ENCODE measurements at regions of chr11 and their contacts with region 1.

Region 1: GRCh38 chr11:117107701-117108590 is 9.7 kb upstream of the SIK3 start:
- DNase-seq: no peak
- ATAC-seq: no peak
- H3K4me3 ChIP-seq: no peak overlapping the region
- H3K4me3 Mint-ChIP-seq: no peak overlapping the region
- H3K27ac ChIP-seq: no peak overlapping the region
- H3K27ac Mint-ChIP-seq: no peak overlapping the region
- H3K4me1 ChIP-seq: peaks cover 0 to 6% of the 10 kb centered on the region in 2 donors
- H3K4me1 Mint-ChIP-seq: peaks cover 7% of the 10 kb centered on the region
- H3K27me3 ChIP-seq: no peaks in the 10 kb centered on the region
- H3K27me3 Mint-ChIP-seq: no peaks in the 10 kb centered on the region
- CTCF ChIP-seq: no peak

Region 2: GRCh38 chr11:116742104-116742503 is 365.8 kb before region 1 on chr11:
- CTCF ChIA-PET with region 1: interaction called, 10 read pairs
- POLR2A ChIA-PET with region 1: no interaction called
- intact Hi-C with region 1: no loop called
- DNase-seq: no peak
- ATAC-seq: no peak
- H3K4me3 ChIP-seq: no peak overlapping the region
- H3K4me3 Mint-ChIP-seq: no peak overlapping the region
- H3K27ac ChIP-seq: no peak overlapping the region
- H3K27ac Mint-ChIP-seq: no peak overlapping the region
- H3K4me1 ChIP-seq: no peaks in the 10 kb centered on the region
- H3K4me1 Mint-ChIP-seq: no peaks in the 10 kb centered on the region
- H3K27me3 ChIP-seq: no peaks in the 10 kb centered on the region
- H3K27me3 Mint-ChIP-seq: no peaks in the 10 kb centered on the region
- CTCF ChIP-seq: no peak

Region 3: DNA sequence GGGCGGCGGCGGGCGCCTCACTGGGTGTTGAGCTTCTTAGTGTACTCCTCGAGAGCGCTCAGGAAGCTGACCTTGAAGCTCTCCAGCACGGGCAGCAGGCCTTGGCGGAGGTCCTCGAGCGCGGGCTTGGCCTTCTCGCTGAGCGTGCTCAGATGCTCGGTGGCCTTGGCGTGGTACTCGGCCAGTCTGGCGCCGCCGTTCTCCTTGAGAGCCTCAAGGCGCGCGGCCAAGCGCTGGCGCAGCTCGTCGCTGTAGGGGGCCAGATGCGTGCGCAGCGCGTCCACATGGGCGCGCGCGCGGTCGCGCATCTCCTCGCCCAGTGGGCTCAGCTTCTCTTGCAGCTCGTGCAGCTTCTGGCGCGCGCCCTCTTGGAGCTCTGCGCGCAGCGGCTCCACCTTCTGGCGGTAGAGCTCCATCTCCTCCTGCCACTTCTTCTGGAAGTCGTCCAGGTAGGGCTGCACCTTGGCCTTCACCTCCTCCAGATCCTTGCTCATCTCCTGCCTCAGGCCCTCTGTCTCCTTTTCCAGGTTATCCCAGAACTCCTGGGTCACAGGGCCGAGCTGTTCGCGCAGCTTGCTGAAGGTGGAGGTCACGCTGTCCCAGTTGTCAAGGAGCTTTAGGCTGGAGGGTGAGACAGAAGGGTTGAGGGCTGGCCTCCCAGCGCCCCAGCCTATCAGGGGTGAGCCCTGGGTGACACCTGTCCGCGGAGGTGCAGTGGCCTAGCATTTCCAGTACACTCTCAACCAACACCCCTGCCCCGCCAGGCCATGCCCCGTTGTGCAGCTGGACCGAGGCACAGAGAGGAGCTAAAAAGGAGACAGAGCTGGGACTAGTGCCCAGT is 271.9 kb before region 1 on chr11:
- CTCF ChIA-PET with region 1: interaction called, 10 read pairs
- POLR2A ChIA-PET with region 1: no interaction called
- intact Hi-C with region 1: no loop called
- DNase-seq: peak; percentile 84
- ATAC-seq: peak; percentile 91
- H3K4me3 ChIP-seq: peak overlapping the region in 4 of 5 experiments; percentile 38 to 61 (median 46)
- H3K4me3 Mint-ChIP-seq: peak overlapping the region; percentile 83
- H3K27ac ChIP-seq: no peak overlapping the region
- H3K27ac Mint-ChIP-seq: no peak overlapping the region
- H3K4me1 ChIP-seq: peaks cover 7 to 14% of the 10 kb centered on the region in 2 donors
- H3K4me1 Mint-ChIP-seq: peaks cover 16% of the 10 kb centered on the region
- H3K27me3 ChIP-seq: peaks cover 0 to 4% (median 0%) of the 10 kb centered on the region in 4 experiments
- H3K27me3 Mint-ChIP-seq: peaks cover 4% of the 10 kb centered on the region
- CTCF ChIP-seq: peak; percentile 44

Region 4: GRCh38 chr11:116879800-116880625 is 227.9 kb before region 1 on chr11:
- CTCF ChIA-PET with region 1: interaction called, 123 read pairs
- POLR2A ChIA-PET with region 1: no interaction called
- intact Hi-C with region 1: loop called (anchors 1 kb)
- DNase-seq: peak; percentile 71
- ATAC-seq: peak; percentile 49
- H3K4me3 ChIP-seq: no peak overlapping the region
- H3K4me3 Mint-ChIP-seq: no peak overlapping the region
- H3K27ac ChIP-seq: no peak overlapping the region
- H3K27ac Mint-ChIP-seq: no peak overlapping the region
- H3K4me1 ChIP-seq: no peaks in the 10 kb centered on the region
- H3K4me1 Mint-ChIP-seq: peaks cover 10% of the 10 kb centered on the region
- H3K27me3 ChIP-seq: no peaks in the 10 kb centered on the region
- H3K27me3 Mint-ChIP-seq: no peaks in the 10 kb centered on the region
- CTCF ChIP-seq: peak; percentile 75

Region 5: GRCh38 chr11:116916052-116916451 is 191.9 kb before region 1 on chr11:
- CTCF ChIA-PET with region 1: interaction called, 12 read pairs
- POLR2A ChIA-PET with region 1: no interaction called
- intact Hi-C with region 1: no loop called
- DNase-seq: no peak
- ATAC-seq: no peak
- H3K4me3 ChIP-seq: no peak overlapping the region
- H3K4me3 Mint-ChIP-seq: no peak overlapping the region
- H3K27ac ChIP-seq: no peak overlapping the region
- H3K27ac Mint-ChIP-seq: no peak overlapping the region
- H3K4me1 ChIP-seq: peaks cover 11 to 13% of the 10 kb centered on the region in 2 donors
- H3K4me1 Mint-ChIP-seq: peaks cover 31% of the 10 kb centered on the region
- H3K27me3 ChIP-seq: no peaks in the 10 kb centered on the region
- H3K27me3 Mint-ChIP-seq: no peaks in the 10 kb centered on the region
- CTCF ChIP-seq: no peak

Region 6: GRCh38 chr11:117226388-117227385 is 118.7 kb after region 1 on chr11:
- CTCF ChIA-PET with region 1: interaction called, 65 read pairs
- POLR2A ChIA-PET with region 1: no interaction called
- intact Hi-C with region 1: loop called (anchors 1 kb)
- DNase-seq: peak; percentile 86
- ATAC-seq: peak; percentile 70
- H3K4me3 ChIP-seq: no peak overlapping the region
- H3K4me3 Mint-ChIP-seq: no peak overlapping the region
- H3K27ac ChIP-seq: no peak overlapping the region
- H3K27ac Mint-ChIP-seq: peak overlapping the region; percentile 74
- H3K4me1 ChIP-seq: peaks cover 26 to 37% of the 10 kb centered on the region in 2 donors
- H3K4me1 Mint-ChIP-seq: peaks cover 35% of the 10 kb centered on the region
- H3K27me3 ChIP-seq: no peaks in the 10 kb centered on the region
- H3K27me3 Mint-ChIP-seq: no peaks in the 10 kb centered on the region
- CTCF ChIP-seq: peak; percentile 84